ENCODE measurements at regions of chr4 and their contacts with region 1.

Region 1: DNA sequence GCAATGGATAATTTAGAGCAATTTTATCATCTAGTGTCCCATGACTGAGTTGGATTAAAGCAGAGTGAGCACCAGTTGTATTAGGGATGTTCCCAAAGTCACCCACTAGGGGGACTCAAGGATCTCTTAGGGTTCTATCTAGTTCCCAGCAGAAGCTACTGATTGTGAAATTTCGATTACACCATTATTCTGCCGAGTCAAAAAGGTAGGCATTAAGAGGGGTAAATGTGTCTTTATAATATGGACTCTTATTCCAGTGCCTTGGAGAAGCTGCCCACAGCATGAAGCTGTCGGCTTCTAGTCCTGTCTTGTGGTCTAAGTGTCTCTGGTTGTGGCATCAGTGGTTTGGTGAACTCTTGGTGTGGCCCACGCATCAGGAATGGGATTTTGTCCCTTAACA is 53.3 kb downstream of the RGS12 start:
- DNase-seq: no peak
- ATAC-seq: peak; percentile 91
- H3K4me3 ChIP-seq: no peak overlapping the region
- H3K27ac ChIP-seq: no peak overlapping the region
- H3K4me1 ChIP-seq: no peaks in the 10 kb centered on the region
- H3K27me3 ChIP-seq: no peaks in the 10 kb centered on the region

Region 2: DNA sequence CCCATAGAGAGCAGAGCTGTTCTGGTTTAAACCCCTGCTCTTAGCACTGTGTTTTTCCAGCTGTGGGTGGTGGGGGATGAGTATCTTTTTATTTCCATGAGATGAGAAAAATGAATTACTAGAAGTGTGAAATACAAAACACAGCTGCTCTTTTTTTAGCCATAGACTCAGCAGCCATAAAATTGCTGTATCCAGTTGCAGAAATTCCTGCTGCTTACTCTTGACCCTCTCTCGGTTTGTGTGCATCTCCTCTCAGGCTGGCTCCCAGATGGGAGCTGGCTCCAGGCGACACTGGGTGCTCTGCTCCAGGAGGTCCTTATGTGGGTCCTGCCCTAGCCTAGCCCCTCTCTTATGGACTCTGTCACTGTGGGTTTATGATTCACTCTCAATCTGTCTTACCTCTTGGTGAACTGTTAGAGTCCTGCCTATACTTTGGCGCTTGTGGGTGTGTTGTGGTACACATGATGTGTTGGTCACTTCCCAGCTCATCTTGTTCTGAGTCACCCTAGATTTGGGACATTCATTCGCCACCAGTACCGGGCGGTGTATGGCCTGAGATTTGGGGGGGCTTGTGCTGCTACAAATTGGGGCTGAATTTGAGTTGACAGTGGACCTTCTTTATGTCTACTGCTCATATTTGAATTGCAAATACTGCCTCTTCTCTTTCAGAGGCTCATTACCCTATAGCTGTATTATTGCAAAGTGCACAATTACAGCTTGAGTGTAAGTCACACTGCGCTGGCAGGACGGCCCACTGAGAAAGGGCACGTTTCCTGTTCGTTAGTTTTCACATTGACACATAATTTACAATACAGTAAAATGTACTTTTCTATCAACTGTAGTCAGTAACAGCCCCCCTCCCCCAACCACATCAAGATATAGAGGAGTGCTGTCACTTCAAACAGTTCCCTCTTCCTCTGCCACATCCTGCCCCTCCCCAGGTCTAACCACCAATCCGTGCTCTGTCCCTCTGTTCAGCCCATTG is 144.1 kb before region 1 on chr4:
- intact Hi-C with region 1: no loop called
- DNase-seq: peak in 1 of 2 donors; percentile 21
- ATAC-seq: no peak
- H3K4me3 ChIP-seq: no peak overlapping the region
- H3K27ac ChIP-seq: no peak overlapping the region
- H3K4me1 ChIP-seq: no peaks in the 10 kb centered on the region
- H3K27me3 ChIP-seq: no peaks in the 10 kb centered on the region

Region 3: DNA sequence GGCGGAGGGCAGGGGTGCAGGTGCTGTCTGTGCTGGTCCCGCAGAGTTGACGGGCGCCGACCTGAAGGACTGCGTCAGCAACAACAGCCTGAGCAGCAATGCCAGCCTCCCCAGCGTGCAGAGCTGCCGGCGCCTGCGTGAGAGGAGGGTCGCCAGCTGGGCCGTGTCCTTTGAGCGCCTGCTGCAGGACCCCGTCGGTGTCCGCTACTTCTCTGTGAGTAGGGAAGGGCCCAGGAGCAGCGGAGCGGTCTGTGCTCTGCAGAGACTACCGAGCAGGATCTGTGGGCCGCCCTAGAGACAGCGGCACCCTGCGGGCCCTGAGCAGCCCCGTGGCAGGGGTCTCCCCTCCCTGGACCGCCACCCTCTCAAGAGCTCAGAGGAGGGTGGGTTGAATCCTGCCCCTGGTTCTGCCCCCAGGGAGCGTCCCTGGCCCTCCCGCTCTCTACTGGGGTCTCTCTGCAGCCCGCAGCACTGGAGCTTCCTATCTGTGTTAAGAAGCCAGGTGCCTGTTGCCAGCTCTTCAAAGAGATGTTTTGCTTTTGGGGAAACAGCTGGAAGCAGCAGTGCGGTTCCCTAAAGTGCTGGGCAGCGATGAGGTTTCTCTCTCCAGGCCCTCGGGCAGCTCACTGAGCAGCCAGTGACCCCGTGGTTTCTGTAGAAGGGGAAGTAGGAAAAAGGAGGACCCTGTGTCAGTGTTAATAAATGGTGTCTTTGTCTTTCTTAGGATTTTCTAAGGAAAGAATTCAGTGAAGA is 68.1 kb after region 1 on chr4:
- intact Hi-C with region 1: no loop called
- DNase-seq: peak; percentile 74 to 76
- ATAC-seq: no peak
- H3K4me3 ChIP-seq: no peak overlapping the region
- H3K27ac ChIP-seq: no peak overlapping the region
- H3K4me1 ChIP-seq: no peaks in the 10 kb centered on the region
- H3K27me3 ChIP-seq: no peaks in the 10 kb centered on the region

Region 4: DNA sequence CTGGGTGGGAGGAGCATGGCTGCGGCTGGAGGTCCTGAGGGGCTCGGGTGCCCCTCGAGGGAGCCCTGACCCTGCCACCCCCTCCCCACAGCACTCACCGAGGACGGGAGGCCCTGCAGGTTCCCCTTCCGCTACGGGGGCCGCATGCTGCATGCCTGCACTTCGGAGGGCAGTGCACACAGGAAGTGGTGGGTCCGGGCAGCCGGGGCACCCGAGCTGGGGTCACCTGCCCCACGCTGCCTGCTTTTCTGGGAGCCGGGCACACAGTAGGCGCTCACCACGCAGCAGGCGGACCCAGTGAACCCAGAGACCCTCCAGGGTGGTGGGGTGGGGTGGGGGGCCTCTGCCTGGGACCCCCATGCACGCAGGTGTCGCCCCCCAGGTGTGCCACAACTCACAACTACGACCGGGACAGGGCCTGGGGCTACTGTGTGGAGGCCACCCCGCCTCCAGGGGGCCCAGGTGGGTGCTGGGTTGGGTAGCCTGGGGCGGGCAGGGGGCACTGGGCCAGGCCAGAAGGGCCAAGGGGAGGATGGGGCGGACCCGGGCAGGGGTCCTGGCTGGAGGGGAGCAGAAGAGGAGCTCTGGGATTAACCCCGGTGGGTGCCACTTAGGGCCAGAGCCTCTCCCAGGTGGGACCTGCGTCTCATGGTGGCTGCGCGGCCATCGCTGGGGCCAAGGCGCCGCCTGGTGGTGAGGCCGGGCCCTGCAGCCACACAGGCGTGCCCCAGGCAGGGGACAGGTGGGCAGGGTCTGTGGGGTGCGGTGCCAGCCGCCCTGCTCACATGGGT is 97.0 kb after region 1 on chr4:
- intact Hi-C with region 1: loop called (anchors 1 to 2 kb)
- DNase-seq: peak in 1 of 2 donors; percentile 87
- ATAC-seq: peak; percentile 65
- H3K4me3 ChIP-seq: no peak overlapping the region
- H3K27ac ChIP-seq: no peak overlapping the region
- H3K4me1 ChIP-seq: no peaks in the 10 kb centered on the region
- H3K27me3 ChIP-seq: no peaks in the 10 kb centered on the region

Region 5: GRCh38 chr4:3529363-3529762 is 183.2 kb after region 1 on chr4:
- intact Hi-C with region 1: no loop called
- DNase-seq: peak; percentile 73 to 79
- ATAC-seq: no peak
- H3K4me3 ChIP-seq: no peak overlapping the region
- H3K27ac ChIP-seq: no peak overlapping the region
- H3K4me1 ChIP-seq: no peaks in the 10 kb centered on the region
- H3K27me3 ChIP-seq: no peaks in the 10 kb centered on the region